ENCODE measurements at regions of chr12 and their contacts with region 1.

Region 1: DNA sequence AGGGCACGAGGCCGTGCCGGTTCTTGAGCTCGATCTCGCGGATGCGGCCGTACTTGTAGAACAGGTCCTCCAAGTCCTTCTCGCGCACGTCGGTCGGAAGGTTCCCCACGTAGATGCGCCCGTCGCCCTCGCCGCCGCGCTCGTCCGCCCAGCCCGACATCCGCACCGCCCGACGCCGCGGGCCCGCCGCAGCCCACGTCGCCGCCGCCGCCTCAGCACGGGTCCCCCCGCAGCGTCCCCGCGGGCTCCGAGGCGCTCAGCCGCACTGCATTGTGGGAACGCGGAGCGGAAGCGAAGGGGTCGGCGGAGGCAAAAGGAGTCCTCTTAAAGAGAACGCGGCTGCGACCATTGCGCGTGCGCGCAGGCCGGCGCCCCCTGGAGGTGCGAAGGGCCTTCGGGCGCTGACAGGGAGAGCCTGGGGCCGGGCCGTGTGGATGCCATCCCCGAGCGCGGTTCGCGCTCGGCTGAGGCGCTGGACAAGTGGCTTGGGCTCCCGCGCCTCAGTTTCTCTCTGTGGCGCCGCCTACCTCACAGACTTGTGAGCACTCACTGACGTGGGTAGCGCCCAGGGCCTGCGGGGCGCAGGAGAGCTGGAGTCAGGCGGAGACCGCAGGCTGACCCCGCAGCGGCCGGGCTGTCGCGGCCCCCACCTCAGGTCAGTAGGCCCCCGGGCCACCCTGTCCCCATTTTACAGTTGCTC is at the start of gene SRSF9:
- DNase-seq: peak; percentile 94 to 99 (median 96)
- ATAC-seq: peak; percentile 87
- H3K4me3 ChIP-seq: peak within 1 kb of the TSS; percentile 90
- H3K27ac ChIP-seq: peak within 1 kb of the TSS; percentile 96
- H3K4me1 ChIP-seq: peaks cover 27 to 35% of the 10 kb centered on the region in 2 experiments
- H3K27me3 ChIP-seq: no peaks in the 10 kb centered on the region
- CTCF ChIP-seq: peak; percentile 88 to 94 (median 93)
- EP300 ChIP-seq: no peak
- POLR2A ChIP-seq: peak; percentile 87
- RAD21 ChIP-seq: peak in 1 of 2 experiments; percentile 36; a peak in 3 of 4 replicates
- polyA plus RNA-seq, gene SRSF9: 40.3 to 50.5 TPM

Region 2: DNA sequence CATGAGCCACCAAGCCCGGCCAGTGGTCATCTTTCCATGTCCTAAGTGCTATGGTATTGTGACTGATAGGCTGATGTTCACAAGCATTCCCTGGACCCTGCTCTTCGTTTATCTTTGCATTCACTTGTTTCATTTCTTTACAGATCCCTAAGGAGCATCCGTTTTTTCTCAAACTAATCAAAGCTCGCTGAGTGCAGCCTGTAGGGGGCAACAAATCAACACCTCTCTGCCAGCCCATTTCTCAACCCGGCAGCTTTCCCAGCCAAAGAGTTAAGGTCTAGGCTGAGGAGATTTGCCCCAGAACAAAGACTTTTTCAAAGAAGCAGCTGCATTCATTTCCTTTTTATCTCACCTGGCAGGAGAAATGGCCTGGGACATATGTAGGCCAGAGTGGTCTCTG is 155.4 kb before region 1 on chr12:
- CTCF ChIA-PET with region 1: no interaction called
- POLR2A ChIA-PET with region 1: no interaction called
- in situ Hi-C with region 1: no loop called
- intact Hi-C with region 1: no loop called
- DNase-seq: peak; percentile 29 to 51 (median 41)
- ATAC-seq: no peak
- H3K4me3 ChIP-seq: no peak overlapping the region
- H3K27ac ChIP-seq: no peak overlapping the region
- H3K4me1 ChIP-seq: peaks cover 3 to 10% of the 10 kb centered on the region in 2 experiments; a peak in 4 of 5 replicates
- H3K27me3 ChIP-seq: no peaks in the 10 kb centered on the region
- CTCF ChIP-seq: peak; percentile 36 to 60 (median 53); a peak in 5 of 6 replicates
- EP300 ChIP-seq: no peak
- POLR2A ChIP-seq: no peak
- RAD21 ChIP-seq: no peak

Region 3: GRCh38 chr12:120356567-120357030 is 113.0 kb before region 1 on chr12:
- CTCF ChIA-PET with region 1: interaction called, 11 read pairs
- POLR2A ChIA-PET with region 1: interaction called, 3 read pairs
- in situ Hi-C with region 1: no loop called
- intact Hi-C with region 1: no loop called
- DNase-seq: peak; percentile 89 to 96 (median 95)
- ATAC-seq: peak; percentile 97
- H3K4me3 ChIP-seq: no peak overlapping the region
- H3K27ac ChIP-seq: no peak overlapping the region
- H3K4me1 ChIP-seq: peaks cover 0 to 19% of the 10 kb centered on the region in 2 experiments; a peak in 3 of 5 replicates
- H3K27me3 ChIP-seq: peaks cover 15 to 45% of the 10 kb centered on the region in 2 experiments; a peak in 4 of 5 replicates
- CTCF ChIP-seq: peak; percentile 90 to 96 (median 95)
- EP300 ChIP-seq: 0 out of 2 replicates have a peak, but pooled peaks have one; percentile 21
- POLR2A ChIP-seq: no peak
- RAD21 ChIP-seq: peak; percentile 90 to 98

Region 4: GRCh38 chr12:120483621-120484020 is 14.0 kb after region 1 on chr12:
- CTCF ChIA-PET with region 1: interaction called, 6 read pairs
- POLR2A ChIA-PET with region 1: interaction called, 13 read pairs
- in situ Hi-C with region 1: no loop called
- intact Hi-C with region 1: no loop called
- DNase-seq: no peak
- ATAC-seq: no peak
- H3K4me3 ChIP-seq: no peak overlapping the region
- H3K27ac ChIP-seq: 0 out of 3 replicates have a peak overlapping the region, but pooled peaks have one; percentile 25
- H3K4me1 ChIP-seq: peaks cover 30 to 41% of the 10 kb centered on the region in 2 experiments
- H3K27me3 ChIP-seq: no peaks in the 10 kb centered on the region; a peak in 1 of 5 replicates
- CTCF ChIP-seq: no peak
- EP300 ChIP-seq: no peak
- POLR2A ChIP-seq: no peak
- RAD21 ChIP-seq: no peak

Region 5: DNA sequence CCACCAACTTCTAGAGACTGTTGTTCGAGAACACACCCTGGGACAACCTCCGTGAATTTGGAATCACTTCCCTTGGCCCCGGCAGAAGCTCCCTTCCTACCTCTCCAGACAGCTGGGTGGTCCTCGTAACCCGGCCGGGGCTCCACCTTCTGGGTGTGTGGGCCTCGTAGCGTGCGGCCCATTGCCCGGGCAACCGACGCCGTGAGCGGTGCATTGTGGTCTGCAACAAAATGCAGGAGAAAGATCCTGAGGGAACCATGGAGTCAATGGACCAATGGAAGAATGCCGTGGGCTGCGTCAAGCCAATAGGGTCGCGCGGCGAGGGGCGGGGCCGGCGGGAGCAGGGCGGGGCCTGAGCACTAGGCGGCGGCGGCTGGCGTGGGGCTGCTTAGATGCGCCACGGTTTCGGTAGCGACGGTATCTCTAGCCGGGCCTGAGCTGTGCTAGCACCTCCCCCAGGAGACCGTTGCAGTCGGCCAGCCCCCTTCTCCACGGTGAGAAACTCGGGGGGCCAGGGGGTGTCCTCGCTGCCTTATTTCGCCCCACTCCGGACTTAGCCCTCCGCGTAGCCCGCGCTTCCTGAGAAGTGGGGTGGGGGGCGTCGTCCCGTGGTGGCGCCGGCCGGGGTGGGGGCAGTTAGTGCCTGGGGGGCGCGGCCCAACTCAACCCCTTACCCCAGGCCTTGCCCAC is 26.3 kb after region 1 on chr12 and contains the start of gene DYNLL1:
- CTCF ChIA-PET with region 1: interaction called, 3 read pairs
- POLR2A ChIA-PET with region 1: interaction called, 13 read pairs
- in situ Hi-C with region 1: no loop called
- intact Hi-C with region 1: loop called (anchors 1 kb)
- DNase-seq: peak; percentile 94 to 98 (median 96)
- ATAC-seq: peak; percentile 98
- H3K4me3 ChIP-seq: peak within 1 kb of the TSS; percentile 97
- H3K27ac ChIP-seq: peak within 1 kb of the TSS; percentile 86
- H3K4me1 ChIP-seq: peaks cover 2 to 15% of the 10 kb centered on the region in 2 experiments; a peak in 3 of 5 replicates
- H3K27me3 ChIP-seq: no peaks in the 10 kb centered on the region
- CTCF ChIP-seq: peak in 1 of 3 experiments; percentile 4; a peak in 1 of 6 replicates
- EP300 ChIP-seq: peak; percentile 17; the same call in 1 of the 2 replicates
- POLR2A ChIP-seq: peak; percentile 94
- RAD21 ChIP-seq: no peak
- polyA plus RNA-seq, gene DYNLL1: 921 to 1,112 TPM

Region 6: DNA sequence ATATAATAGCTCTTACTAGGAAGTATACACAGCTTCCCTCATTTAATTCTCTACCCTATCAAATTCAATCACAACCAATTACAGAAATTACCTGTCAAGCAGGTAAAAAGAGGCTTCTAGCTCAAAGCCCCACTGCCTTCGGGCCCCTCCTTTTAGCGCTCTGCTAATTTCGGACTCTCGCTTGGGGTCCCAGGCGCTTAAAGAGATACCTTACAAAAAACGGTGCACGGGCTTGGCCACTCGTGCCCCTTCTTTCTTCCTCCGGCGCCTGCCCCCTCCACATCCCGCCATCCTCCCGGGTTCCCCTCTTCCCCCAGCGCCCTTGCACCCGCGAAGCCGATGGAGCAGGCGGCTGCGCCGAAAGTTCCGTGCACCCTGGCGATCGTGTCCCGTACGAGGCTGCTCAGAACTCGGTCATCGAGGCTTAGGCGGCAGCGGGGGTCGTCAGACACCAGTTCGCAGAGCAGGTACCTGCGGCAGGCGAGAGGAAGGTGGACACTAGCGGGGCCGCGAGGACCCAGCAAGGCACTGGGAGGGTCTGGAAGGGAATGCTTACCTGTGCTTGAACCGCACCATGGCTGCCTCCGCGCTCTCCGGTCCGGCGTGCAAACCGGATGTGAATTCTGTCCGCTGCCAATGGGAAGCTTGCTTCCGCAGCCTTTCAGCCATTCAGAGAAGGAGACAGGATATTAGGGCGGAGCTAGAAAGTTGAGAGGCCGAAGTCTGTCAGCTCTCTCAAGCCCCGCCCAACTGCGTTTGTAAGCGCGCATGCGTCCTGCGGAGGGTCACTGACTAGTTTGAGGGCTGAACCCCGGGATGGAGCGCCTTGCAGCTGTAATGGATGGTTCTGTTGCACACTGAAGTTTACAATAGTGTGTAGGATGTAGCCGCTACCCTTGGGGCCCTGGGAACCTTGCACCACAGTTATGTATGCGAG is 111.5 kb after region 1 on chr12 and contains the start of gene POP5:
- CTCF ChIA-PET with region 1: no interaction called
- POLR2A ChIA-PET with region 1: interaction called, 3 read pairs
- in situ Hi-C with region 1: no loop called
- intact Hi-C with region 1: loop called (anchors 5 kb)
- DNase-seq: peak; percentile 92 to 99 (median 94)
- ATAC-seq: peak; percentile 95
- H3K4me3 ChIP-seq: peak within 1 kb of the TSS; percentile 70
- H3K27ac ChIP-seq: peak within 1 kb of the TSS; percentile 66
- H3K4me1 ChIP-seq: peaks cover 13 to 19% of the 10 kb centered on the region in 2 experiments; a peak in 3 of 5 replicates
- H3K27me3 ChIP-seq: peaks cover 5 to 8% of the 10 kb centered on the region in 2 experiments; a peak in 3 of 5 replicates
- CTCF ChIP-seq: 0 out of 6 replicates have a peak, but pooled peaks of 1 of the 3 experiments have one; percentile 4
- EP300 ChIP-seq: no peak
- POLR2A ChIP-seq: peak; percentile 93
- RAD21 ChIP-seq: no peak
- polyA plus RNA-seq, gene POP5: 235 to 253 TPM